ENCODE measurements at regions of chr3 and their contacts with region 1.

Region 1: GRCh38 chr3:100002599-100003350 is 111.5 kb downstream of the FILIP1L start:
- DNase-seq: peak; percentile 89
- H3K4me3 Mint-ChIP-seq: peak overlapping the region; percentile 31
- H3K27ac Mint-ChIP-seq: peak overlapping the region; percentile 75
- H3K4me1 Mint-ChIP-seq: peaks cover 60% of the 10 kb centered on the region
- H3K27me3 Mint-ChIP-seq: no peaks in the 10 kb centered on the region
- CTCF ChIP-seq: no peak

Region 2: GRCh38 chr3:99859825-99860224 is 142.9 kb before region 1 on chr3:
- CTCF ChIA-PET with region 1: interaction called, 3 read pairs
- POLR2A ChIA-PET with region 1: interaction called, 12 read pairs
- intact Hi-C with region 1: no loop called
- DNase-seq: peak; percentile 58
- H3K4me3 Mint-ChIP-seq: no peak overlapping the region
- H3K27ac Mint-ChIP-seq: peak overlapping the region; percentile 69
- H3K4me1 Mint-ChIP-seq: peaks cover 35% of the 10 kb centered on the region
- H3K27me3 Mint-ChIP-seq: no peaks in the 10 kb centered on the region
- CTCF ChIP-seq: no peak

Region 3: GRCh38 chr3:99920481-99921376 is 82.0 kb before region 1 on chr3:
- CTCF ChIA-PET with region 1: interaction called, 3 read pairs
- POLR2A ChIA-PET with region 1: interaction called, 3 read pairs
- intact Hi-C with region 1: loop called (anchors 5 kb)
- DNase-seq: peak; percentile 73
- H3K4me3 Mint-ChIP-seq: no peak overlapping the region
- H3K27ac Mint-ChIP-seq: peak overlapping the region; percentile 85
- H3K4me1 Mint-ChIP-seq: peaks cover 19% of the 10 kb centered on the region
- H3K27me3 Mint-ChIP-seq: no peaks in the 10 kb centered on the region
- CTCF ChIP-seq: no peak

Region 4: GRCh38 chr3:100032243-100032642 is 29.5 kb after region 1 on chr3:
- CTCF ChIA-PET with region 1: interaction called, 3 read pairs
- POLR2A ChIA-PET with region 1: interaction called, 30 read pairs
- intact Hi-C with region 1: no loop called
- DNase-seq: peak; percentile 34
- H3K4me3 Mint-ChIP-seq: peak overlapping the region; percentile 36
- H3K27ac Mint-ChIP-seq: peak overlapping the region; percentile 68
- H3K4me1 Mint-ChIP-seq: peaks cover 19% of the 10 kb centered on the region
- H3K27me3 Mint-ChIP-seq: no peaks in the 10 kb centered on the region
- CTCF ChIP-seq: no peak

Region 5: DNA sequence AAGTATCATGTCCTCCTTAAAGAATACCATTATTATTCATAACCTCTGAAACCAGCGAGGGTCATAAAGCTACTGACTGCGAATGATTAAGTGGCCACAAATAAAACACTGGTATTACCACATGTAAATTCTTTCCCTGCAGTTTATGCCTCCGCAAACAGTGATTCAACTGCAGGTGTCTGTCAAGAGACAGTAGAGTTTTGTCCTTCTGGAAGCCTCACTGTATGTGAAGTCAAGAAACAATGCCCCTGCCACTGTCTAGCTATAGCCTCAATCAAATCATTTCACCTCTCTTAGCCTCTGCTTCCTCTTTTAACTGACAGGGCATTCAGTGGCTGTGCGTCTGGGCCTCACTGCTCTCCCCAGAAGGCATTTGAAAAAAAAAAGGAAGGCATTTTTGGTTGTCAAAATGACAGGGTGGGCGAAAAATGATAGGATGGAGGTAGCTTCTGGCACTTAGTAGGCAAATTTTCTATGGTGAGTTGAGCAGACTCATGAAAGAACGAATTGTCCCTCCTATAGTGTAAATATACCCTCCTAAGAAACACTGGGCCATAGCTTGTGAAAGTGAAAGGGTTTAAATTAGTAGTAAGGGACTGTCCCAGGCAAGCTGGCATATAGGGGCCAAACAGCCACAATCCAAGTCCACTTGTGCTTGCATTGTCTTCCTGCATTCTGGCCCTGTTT is 44.8 kb after region 1 on chr3:
- CTCF ChIA-PET with region 1: no interaction called
- POLR2A ChIA-PET with region 1: interaction called, 32 read pairs
- intact Hi-C with region 1: loop called (anchors 5 kb)
- DNase-seq: peak; percentile 74
- H3K4me3 Mint-ChIP-seq: peak overlapping the region; percentile 22
- H3K27ac Mint-ChIP-seq: peak overlapping the region; percentile 85
- H3K4me1 Mint-ChIP-seq: peaks cover 44% of the 10 kb centered on the region
- H3K27me3 Mint-ChIP-seq: no peaks in the 10 kb centered on the region
- CTCF ChIP-seq: no peak

Region 6: DNA sequence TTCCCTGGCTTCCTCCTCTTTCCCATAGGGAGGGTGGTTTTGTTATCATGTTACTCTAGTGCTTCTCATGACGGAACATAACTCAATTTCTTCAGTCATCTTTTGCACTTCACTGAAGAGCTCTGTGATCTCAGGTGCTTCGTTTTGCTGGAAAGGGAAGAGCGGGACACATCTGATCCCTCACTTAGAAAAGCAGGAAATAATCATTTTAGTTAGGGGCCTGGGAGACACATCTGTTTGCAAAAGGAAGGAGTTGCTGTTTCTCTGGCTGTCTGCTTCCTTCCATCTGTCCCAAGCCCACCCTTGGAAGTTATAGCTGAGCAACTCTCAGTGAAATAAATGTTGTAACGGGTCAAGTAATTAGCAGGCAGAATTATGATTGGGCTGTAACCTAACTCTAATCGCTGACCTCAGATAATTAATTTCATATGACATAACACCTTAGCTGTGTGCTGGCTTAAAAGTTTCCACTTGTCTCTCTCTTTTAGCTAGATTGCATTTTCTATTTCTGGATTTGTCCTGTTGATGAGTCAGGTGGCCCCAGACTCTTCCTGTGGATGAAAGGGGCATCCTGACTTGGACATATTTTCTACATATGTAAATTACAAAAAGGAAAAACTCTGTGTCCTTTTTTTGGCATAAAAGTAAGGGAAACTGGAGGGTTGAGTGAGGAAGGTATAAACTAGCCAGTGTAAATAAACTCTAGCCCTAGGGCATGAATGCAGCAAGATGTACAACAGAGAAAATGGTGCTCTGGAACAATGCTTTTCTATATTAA is 122.6 kb after region 1 on chr3:
- CTCF ChIA-PET with region 1: no interaction called
- POLR2A ChIA-PET with region 1: no interaction called
- intact Hi-C with region 1: no loop called
- DNase-seq: peak; percentile 15
- H3K4me3 Mint-ChIP-seq: no peak overlapping the region
- H3K27ac Mint-ChIP-seq: no peak overlapping the region
- H3K4me1 Mint-ChIP-seq: peaks cover 11% of the 10 kb centered on the region
- H3K27me3 Mint-ChIP-seq: no peaks in the 10 kb centered on the region
- CTCF ChIP-seq: no peak